HEK293T (cell line): ENCODE measurements at regions of chr18 and their contacts with region 1.

Region 1: GRCh38 chr18:21191596-21192307 is 50.3 kb upstream of the GREB1L start:
- DNase-seq: peak; percentile 80

Region 2: GRCh38 chr18:21053127-21053526 is 138.6 kb before region 1 on chr18:
- CTCF ChIA-PET with region 1: no interaction called
- POLR2A ChIA-PET with region 1: no interaction called
- DNase-seq: no peak

Region 3: GRCh38 chr18:21179590-21180220 is 12.0 kb before region 1 on chr18:
- CTCF ChIA-PET with region 1: interaction called, 14 read pairs
- POLR2A ChIA-PET with region 1: no interaction called
- DNase-seq: peak; percentile 79

Region 4: DNA sequence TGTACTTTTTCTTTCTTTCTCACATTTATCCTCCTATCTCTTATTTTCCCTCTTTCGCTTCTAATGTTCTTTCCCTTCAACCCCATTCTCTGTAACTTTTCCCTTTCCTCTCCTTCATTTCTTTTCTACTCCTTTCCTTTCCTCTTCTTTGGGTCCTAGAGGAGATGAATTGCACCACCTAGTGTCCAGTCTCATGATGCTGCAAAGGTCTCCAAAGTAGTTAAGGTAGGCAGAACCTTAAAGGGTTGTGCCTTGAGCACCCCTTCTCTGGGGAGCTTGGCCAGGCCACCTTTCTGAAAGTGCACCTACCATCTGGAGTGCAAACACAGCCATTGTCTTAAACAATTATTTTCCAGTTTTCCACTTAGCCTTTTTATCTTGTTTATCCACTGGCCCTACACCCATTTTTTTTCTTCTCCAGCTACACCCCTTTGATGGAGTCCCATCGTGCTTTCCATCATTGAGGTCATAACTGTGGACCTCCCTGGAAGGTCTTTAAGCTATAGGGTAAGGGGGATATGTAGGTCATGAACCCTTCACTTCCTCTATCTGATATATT is 252.8 kb after region 1 on chr18:
- CTCF ChIA-PET with region 1: interaction called, 10 read pairs
- POLR2A ChIA-PET with region 1: interaction called, 3 read pairs
- DNase-seq: peak; percentile 63